PC-9 (cell line): ENCODE measurements at regions of chr17 and their contacts with region 1.

Region 1: DNA sequence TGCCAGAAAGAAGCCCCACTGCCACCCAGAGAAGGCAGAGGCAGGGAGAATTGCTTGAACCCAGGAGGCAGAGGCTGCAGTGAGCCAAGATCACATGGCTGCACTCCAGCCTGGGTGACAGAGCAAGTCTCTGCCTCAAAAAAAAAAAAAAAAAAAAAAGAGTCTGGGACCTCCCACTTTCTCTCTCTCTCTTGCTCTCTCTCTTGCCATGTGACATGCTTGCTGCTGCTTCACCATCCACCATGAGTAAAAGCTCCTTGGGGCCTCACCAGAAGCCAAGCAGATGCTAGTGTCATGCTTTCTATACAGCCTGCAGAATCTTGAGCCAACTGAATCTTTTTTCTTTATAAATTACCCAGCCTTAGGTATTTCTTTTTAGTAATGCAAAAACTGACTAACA is 21.5 kb upstream of the SRSF1 start:
- DNase-seq: no peak
- H3K4me3 ChIP-seq: no peak overlapping the region
- H3K27ac ChIP-seq: no peak overlapping the region
- H3K4me1 ChIP-seq: peaks cover 16% of the 10 kb centered on the region
- H3K27me3 ChIP-seq: no peaks in the 10 kb centered on the region
- CTCF ChIP-seq: no peak

Region 2: DNA sequence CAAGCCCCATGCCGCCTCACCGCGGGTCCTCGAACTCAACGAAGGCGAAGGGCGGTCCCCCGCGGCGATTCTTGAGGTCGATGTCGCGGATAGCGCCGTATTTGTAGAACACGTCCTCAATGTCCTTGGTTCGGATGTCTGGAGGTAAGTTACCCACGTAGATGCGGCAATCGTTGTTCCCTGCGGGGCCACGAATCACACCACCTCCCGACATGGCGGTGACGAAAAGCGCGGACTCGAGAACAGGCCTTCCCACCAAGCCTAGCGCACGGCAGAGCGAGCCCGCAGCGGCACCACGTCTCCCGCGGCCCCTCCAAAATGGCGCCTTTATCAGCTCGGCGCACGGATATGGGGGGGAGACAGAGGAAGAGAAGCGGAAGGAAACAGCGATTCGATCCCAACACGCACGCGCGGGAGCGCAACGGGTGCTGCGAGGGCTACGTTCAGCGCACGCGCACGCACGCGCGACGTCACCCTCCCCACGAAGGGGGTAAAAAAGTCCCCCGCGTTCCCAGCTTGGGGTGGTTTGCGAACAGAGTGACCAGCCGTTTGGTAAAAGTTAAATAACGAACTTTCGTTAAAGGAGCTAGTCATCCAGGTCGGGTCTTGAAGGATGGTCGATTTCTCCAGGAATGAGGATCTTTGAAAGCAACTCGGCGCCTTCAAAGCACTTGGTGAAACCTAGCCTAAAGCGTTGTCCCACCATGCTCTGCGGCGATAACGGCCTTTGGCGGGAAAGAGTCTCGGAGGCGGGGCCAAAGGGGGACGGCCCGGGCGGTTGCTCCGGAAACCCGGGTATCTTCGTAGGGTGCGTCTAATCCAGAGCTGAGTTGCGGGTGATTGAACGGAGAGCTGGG is 21.4 kb before region 1 on chr17 and contains the start of gene SRSF1:
- CTCF ChIA-PET with region 1: no interaction called
- POLR2A ChIA-PET with region 1: no interaction called
- intact Hi-C with region 1: loop called (anchors 1 kb)
- DNase-seq: peak; percentile 95 to 96
- H3K4me3 ChIP-seq: peak within 1 kb of the TSS; percentile 95
- H3K27ac ChIP-seq: peak within 1 kb of the TSS; percentile 95
- H3K4me1 ChIP-seq: peaks cover 38% of the 10 kb centered on the region
- H3K27me3 ChIP-seq: no peaks in the 10 kb centered on the region
- CTCF ChIP-seq: 0 out of 2 replicates have a peak, but pooled peaks have one; percentile 8
- total RNA-seq, gene SRSF1: 210 and 278 TPM in 2 replicates